Activated CD4-positive, alpha-beta T cell treated with anti-CD3 and anti-CD28 coated beads, Interleukin-2, amount 10 ng/mL, durations not matched to agents 24 days and 14 days (primary cell): ENCODE measurements at regions of chr6 and their contacts with region 1.

Region 1: DNA sequence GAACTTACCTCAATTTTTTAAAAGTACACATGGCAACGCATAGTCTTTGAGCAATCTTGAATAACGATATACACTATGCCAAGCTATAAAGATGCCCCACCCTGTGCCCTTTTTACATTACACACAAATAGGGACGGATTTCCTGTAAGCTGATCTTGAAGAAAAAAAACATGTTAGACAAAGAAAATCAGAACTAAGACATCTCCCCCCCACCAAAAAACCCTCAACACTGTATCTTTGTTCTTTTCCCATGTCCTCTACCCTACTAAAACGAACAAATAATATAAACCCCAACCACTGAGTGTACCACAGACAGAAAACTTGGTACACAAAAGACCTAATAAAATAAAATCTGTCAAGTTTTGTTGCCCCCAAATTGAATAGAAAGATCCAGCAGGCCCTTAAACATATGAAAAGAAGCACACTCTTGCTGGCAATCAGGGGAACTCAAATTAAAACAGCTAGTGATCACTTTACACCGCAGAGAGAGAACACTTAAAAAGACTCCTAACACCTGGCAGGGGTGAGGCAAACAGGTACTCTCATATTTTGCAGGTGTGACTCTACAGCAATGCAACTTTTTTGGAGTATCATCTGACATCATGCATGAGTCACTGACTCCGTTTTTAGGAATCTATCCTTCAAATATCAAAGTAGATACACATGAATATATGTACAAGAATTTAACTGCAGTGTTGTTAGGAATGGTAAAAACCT is 29.6 kb downstream of the BACH2 start:
- DNase-seq: peak; percentile 53
- H3K4me3 Mint-ChIP-seq: peak overlapping the region; percentile 52
- H3K27ac Mint-ChIP-seq: peak overlapping the region; percentile 82
- H3K4me1 Mint-ChIP-seq: peaks cover 73% of the 10 kb centered on the region
- H3K27me3 Mint-ChIP-seq: no peaks in the 10 kb centered on the region

Region 2: DNA sequence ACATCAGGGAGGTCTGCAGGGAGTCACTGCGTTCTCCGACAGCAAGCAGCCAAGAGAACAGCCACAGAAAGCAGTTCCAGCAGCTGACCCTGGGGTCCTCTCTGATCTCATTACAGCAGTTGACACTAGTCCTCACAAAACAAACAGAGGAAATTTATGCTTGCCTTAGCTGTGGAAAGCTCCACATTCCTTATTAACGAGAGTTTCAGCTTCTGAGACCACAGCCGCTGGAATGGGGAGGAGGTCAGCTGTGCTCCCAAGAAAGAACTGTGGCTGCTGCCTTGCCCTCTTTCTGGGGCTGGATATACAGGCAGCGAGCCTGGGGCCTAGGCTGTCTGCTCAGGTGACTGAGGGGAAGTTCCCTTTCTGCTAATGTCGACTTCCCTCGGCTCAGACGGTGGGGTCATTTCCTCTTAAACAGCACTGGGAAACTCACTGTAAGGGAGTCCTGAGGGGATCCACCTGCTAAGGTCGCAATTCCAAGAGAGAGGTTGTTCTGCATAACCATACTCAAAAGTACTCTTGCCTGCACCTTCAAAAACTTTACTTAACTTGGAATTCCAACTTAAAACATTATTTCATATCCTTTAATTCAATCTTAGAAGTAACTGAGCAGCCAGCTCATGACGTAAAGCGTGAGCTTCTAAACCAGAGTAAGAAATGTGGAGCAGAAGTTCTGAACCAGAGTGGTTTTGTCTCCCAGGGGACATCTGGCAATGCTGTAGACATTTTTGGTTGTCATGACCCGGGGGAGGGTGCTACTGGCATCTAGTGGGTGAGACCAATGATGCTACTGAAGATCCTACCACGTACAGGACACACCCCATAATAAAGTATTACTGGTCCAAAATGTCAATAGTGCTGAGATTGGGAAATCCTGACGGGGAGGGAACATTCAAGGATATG is 50.7 kb before region 1 on chr6:
- intact Hi-C with region 1: no loop called
- DNase-seq: peak; percentile 79
- H3K4me3 Mint-ChIP-seq: peak overlapping the region; percentile 48
- H3K27ac Mint-ChIP-seq: no peak overlapping the region
- H3K4me1 Mint-ChIP-seq: peaks cover 40% of the 10 kb centered on the region
- H3K27me3 Mint-ChIP-seq: no peaks in the 10 kb centered on the region

Region 3: DNA sequence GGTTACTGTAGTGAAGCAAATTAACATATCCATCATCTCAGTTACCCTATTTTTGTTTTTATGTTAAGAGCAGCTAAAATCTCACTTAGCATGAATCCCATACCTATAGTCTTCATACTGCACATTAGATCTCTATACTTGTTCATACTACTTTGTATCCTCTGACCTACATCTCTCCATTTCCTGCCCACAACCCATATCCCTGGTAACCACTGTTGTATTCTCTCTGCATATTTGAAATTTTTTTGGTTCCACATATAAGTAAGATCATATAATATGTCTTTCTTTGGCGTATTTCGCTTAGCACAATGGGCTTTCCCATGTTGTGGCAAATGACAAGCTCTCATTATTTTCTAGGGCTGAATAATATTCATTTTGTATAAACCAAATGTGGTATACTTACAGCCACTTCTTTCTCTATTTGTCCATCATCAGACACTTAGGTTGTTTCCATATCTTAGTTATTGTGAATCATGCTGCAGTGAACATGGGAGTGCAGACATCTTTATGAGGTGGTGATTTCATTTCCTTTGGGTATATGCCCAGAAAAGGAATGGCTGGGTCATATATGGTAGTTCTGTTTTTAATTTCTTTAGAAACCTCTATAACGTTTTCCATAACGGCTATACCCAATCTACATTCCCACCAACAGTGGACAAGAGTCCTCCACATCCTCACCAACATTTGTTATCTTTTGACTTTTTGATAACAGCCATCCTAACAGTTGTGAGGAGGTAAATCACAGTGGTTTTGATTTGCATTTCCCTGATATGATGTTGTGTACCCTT is 10.2 kb before region 1 on chr6:
- intact Hi-C with region 1: loop called (anchors 1 kb)
- DNase-seq: peak; percentile 81
- H3K4me3 Mint-ChIP-seq: peak overlapping the region; percentile 6
- H3K27ac Mint-ChIP-seq: peak overlapping the region; percentile 89
- H3K4me1 Mint-ChIP-seq: peaks cover 66% of the 10 kb centered on the region
- H3K27me3 Mint-ChIP-seq: no peaks in the 10 kb centered on the region